PC-9 (cell line): ENCODE measurements at regions of chr18 and their contacts with region 1.

Region 1: DNA sequence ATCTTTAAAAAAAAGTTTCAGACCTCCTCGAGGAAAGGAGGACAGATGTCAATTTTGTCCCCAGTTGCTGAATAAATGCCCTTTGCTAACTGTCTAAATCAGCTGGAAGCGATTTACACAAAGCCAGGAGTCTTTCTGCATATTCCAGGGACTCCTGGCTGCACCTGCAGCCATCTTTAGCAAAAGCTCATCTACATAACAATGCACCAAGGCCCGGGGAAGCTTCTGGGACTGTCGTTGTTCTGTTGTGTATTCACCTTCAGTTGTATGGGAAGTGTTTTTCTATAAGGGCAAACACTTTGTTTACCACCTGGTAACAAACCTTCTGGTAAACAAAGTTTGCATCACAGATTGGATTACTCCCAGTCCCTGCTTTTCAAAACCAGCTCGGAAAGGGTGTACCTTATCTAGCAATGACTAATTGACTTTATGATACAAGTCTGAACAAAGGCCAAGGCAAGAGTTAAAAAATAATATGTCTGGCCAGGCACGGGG is 35.6 kb upstream of the PMAIP1 start:
- DNase-seq: peak in 1 of 2 experiments; percentile 64
- H3K4me3 ChIP-seq: no peak overlapping the region
- H3K27ac ChIP-seq: 0 out of 2 replicates have a peak overlapping the region, but pooled peaks have one; percentile 5
- H3K4me1 ChIP-seq: peaks cover 44% of the 10 kb centered on the region
- H3K27me3 ChIP-seq: no peaks in the 10 kb centered on the region
- CTCF ChIP-seq: no peak

Region 2: GRCh38 chr18:59918320-59918755 is 54.1 kb after region 1 on chr18:
- CTCF ChIA-PET with region 1: no interaction called
- POLR2A ChIA-PET with region 1: interaction called, 10 read pairs
- intact Hi-C with region 1: no loop called
- DNase-seq: peak; percentile 86 to 94
- H3K4me3 ChIP-seq: peak overlapping the region; percentile 20; the same call in 1 of the 2 replicates
- H3K27ac ChIP-seq: peak overlapping the region; percentile 94
- H3K4me1 ChIP-seq: peaks cover 76% of the 10 kb centered on the region
- H3K27me3 ChIP-seq: no peaks in the 10 kb centered on the region
- CTCF ChIP-seq: no peak